ENCODE measurements at regions of chr17 and their contacts with region 1.

Region 1: DNA sequence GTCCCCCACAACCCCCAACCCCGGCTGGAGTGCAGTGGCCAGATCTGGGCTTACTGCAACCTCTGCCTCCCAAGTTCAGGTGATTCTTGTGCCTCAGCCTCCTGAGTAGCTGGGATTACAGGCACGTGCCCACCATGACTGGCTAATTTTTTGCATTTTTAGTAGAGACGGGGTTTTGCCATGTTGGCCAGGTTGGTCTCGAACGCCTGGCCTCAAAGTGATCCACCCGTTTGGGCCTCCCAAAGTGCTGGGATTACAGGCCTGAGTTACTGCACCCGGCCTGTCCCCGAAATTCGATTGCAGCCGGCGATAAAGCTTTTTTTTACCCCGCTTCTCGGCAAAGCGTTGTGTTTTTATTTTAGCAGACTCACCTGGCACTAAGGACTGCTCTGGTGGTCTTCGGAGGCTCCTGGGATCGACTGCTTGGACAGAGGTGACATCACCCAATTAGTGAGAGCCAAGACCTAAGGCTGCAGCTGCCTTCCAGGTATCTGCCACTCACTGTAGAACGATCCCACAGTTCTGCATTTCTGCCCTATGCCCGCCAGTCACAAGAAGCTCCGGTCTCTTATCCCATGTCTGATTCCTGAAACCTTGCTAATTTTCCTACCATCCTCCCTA is 82.2 kb upstream of the ARL4D start:
- DNase-seq: peak in 4 of 35 experiments; percentile 6 to 34 (median 18)
- ATAC-seq: no peak
- H3K4me3 ChIP-seq: no peak overlapping the region
- H3K4me3 Mint-ChIP-seq: no peak overlapping the region
- H3K27ac ChIP-seq: no peak overlapping the region
- H3K27ac Mint-ChIP-seq: peak overlapping the region in 1 of 2 donors; percentile 64
- H3K4me1 ChIP-seq: peaks cover 0 to 2% of the 10 kb centered on the region in 2 experiments
- H3K4me1 Mint-ChIP-seq: peaks cover 6 to 14% (median 10%) of the 10 kb centered on the region in 3 donors
- H3K27me3 ChIP-seq: no peaks in the 10 kb centered on the region
- H3K27me3 Mint-ChIP-seq: no peaks in the 10 kb centered on the region

Region 2: GRCh38 chr17:43211480-43212402 is 104.9 kb before region 1 on chr17 and contains the start of gene TMEM106A:
- CTCF ChIA-PET with region 1: interaction called in 1 of 2 experiments, 10 read pairs
- POLR2A ChIA-PET with region 1: interaction called in 1 of 2 experiments, 12 read pairs
- DNase-seq: peak; percentile 42 to 85 (median 65)
- ATAC-seq: peak; percentile 89 to 94 (median 92)
- H3K4me3 ChIP-seq: peak within 1 kb of the TSS; percentile 68 to 80
- H3K4me3 Mint-ChIP-seq: peak within 1 kb of the TSS; percentile 97 to 99 (median 98)
- H3K27ac ChIP-seq: peak within 1 kb of the TSS; percentile 84
- H3K27ac Mint-ChIP-seq: peak within 1 kb of the TSS; percentile 89 to 97
- H3K4me1 ChIP-seq: peaks cover 18 to 22% of the 10 kb centered on the region in 2 experiments
- H3K4me1 Mint-ChIP-seq: peaks cover 29 to 37% (median 34%) of the 10 kb centered on the region in 3 donors
- H3K27me3 ChIP-seq: no peaks in the 10 kb centered on the region
- H3K27me3 Mint-ChIP-seq: no peaks in the 10 kb centered on the region
- total RNA-seq, gene TMEM106A: 9.3 to 18.1 (median 10.4) TPM

Region 3: GRCh38 chr17:43351691-43352090 is 35.1 kb after region 1 on chr17:
- CTCF ChIA-PET with region 1: no interaction called
- POLR2A ChIA-PET with region 1: no interaction called
- DNase-seq: no peak
- ATAC-seq: no peak
- H3K4me3 ChIP-seq: no peak overlapping the region
- H3K4me3 Mint-ChIP-seq: no peak overlapping the region
- H3K27ac ChIP-seq: no peak overlapping the region
- H3K27ac Mint-ChIP-seq: no peak overlapping the region
- H3K4me1 ChIP-seq: no peaks in the 10 kb centered on the region
- H3K4me1 Mint-ChIP-seq: peaks cover 0 to 8% (median 5%) of the 10 kb centered on the region in 3 donors
- H3K27me3 ChIP-seq: no peaks in the 10 kb centered on the region
- H3K27me3 Mint-ChIP-seq: no peaks in the 10 kb centered on the region

Region 4: DNA sequence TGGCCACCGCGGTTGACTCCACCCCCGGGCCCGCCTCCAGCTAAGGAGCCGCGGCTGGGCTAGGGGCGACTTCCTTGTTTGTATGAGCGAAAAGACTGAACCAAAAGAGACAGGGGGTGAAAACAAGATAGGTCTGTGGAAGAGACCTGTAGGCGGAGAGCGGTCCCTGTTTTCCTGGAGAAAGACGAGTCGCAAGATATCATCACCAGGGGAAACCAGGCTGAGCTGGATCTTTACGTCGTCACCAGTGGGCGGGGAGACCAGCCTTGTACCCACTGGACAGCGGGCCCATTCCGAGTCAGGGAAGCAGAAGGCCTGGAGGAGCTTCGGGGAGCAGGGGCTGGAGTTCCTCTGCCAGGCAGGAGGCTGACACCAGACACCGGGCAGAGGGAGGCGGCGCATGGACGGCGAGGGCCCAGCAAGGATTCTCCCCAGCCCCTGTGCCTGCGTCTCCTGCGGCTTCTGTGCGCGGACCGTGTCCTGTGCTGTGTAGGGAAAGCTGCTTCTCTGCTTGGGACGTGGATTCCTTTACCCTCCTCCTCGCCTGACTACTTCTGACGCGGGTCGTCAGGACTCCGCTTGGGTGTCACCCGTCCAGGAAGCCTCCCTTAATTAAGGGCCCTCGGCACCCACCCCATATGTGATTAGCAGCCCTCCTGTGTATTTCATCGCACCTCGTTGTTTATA is 71.9 kb after region 1 on chr17:
- CTCF ChIA-PET with region 1: interaction called in 1 of 2 experiments, 8 read pairs
- POLR2A ChIA-PET with region 1: interaction called in 1 of 2 experiments, 13 read pairs
- DNase-seq: peak; percentile 85 to 94 (median 89)
- ATAC-seq: peak; percentile 73 to 80 (median 78)
- H3K4me3 ChIP-seq: peak overlapping the region; percentile 89 to 92
- H3K4me3 Mint-ChIP-seq: peak overlapping the region; percentile 90 to 94 (median 93)
- H3K27ac ChIP-seq: peak overlapping the region; percentile 99
- H3K27ac Mint-ChIP-seq: peak overlapping the region; percentile 96 to 97
- H3K4me1 ChIP-seq: peaks cover 6 to 26% of the 10 kb centered on the region in 2 experiments
- H3K4me1 Mint-ChIP-seq: peaks cover 20 to 35% (median 28%) of the 10 kb centered on the region in 3 donors
- H3K27me3 ChIP-seq: no peaks in the 10 kb centered on the region
- H3K27me3 Mint-ChIP-seq: no peaks in the 10 kb centered on the region